ENCODE measurements at regions of chr1 and their contacts with region 1.

Region 1: GRCh38 chr1:104526158-104526795 is 776.6 kb downstream of the AMY1C start:
- DNase-seq: no peak
- H3K4me3 Mint-ChIP-seq: no peak overlapping the region
- H3K27ac Mint-ChIP-seq: no peak overlapping the region
- H3K4me1 Mint-ChIP-seq: no peaks in the 10 kb centered on the region
- H3K27me3 Mint-ChIP-seq: peaks cover 13% of the 10 kb centered on the region
- CTCF ChIP-seq: no peak

Region 2: DNA sequence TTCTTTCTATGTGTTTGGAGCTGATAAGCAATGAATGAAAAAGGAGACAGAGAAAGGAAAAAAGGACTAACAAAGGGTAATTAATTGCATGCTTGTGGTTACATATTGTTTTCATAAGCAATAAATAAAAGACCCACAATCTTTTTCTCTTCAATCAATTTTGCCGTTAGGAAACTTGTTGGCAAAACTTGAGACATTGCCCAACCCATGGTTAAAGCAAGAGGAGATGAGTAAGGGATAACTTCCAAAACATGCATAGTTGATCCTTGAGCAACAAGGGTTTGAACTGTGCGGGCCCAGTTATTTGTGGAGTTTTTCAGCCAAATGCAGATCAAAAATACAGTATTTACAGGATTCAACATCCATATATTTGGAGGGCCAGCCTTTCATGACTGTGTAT is 204.1 kb before region 1 on chr1:
- CTCF ChIA-PET with region 1: no interaction called
- POLR2A ChIA-PET with region 1: no interaction called
- intact Hi-C with region 1: no loop called
- DNase-seq: peak; percentile 53
- H3K4me3 Mint-ChIP-seq: no peak overlapping the region
- H3K27ac Mint-ChIP-seq: no peak overlapping the region
- H3K4me1 Mint-ChIP-seq: no peaks in the 10 kb centered on the region
- H3K27me3 Mint-ChIP-seq: no peaks in the 10 kb centered on the region
- CTCF ChIP-seq: no peak

Region 3: GRCh38 chr1:106360254-106360653 is 1834.0 kb after region 1 on chr1:
- CTCF ChIA-PET with region 1: no interaction called
- POLR2A ChIA-PET with region 1: no interaction called
- intact Hi-C with region 1: loop called (anchors 10 kb)
- DNase-seq: no peak
- H3K4me3 Mint-ChIP-seq: no peak overlapping the region
- H3K27ac Mint-ChIP-seq: no peak overlapping the region
- H3K4me1 Mint-ChIP-seq: no peaks in the 10 kb centered on the region
- H3K27me3 Mint-ChIP-seq: no peaks in the 10 kb centered on the region
- CTCF ChIP-seq: peak; percentile 20

Measured in MCF 10A (cell line).